Motor neuron (in vitro differentiated cells): ENCODE measurements at regions of chr13 and their contacts with region 1.

Region 1: DNA sequence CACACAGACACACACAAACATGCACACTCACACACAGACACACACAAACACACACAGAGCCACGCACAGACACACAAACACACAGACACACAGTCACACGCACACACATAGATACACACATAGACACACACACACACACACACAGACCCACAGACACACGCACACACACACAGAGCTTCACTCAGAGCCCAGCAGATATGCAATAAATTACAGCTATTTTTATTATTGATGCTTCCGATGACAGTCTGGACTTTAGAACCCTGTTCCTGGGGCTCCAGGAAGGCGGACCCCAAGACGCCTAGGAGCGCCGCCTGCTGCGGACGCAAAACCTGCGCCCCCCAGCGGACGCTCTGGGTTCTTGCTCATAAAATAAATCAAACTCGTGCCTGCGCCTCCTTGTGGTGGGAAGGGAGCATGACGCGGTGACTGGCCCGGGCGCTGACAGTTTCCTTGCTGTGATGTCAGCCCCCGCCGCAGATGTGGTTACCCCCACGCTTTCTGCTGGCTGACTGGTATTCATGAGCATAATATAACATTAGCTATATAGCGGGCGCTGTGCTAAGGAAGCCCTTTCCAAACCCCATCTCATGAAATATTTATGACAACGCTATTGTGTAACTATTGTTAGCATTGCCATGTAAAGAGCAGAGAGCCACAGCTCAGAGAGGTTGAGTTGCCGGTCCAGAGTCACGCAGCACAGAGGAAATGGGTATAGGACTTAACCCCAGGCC is 64.4 kb upstream of the TM9SF2 start:
- ATAC-seq: peak; percentile 68 to 90 (median 74)
- H3K4me3 ChIP-seq: no peak overlapping the region
- H3K27ac ChIP-seq: no peak overlapping the region
- H3K4me1 ChIP-seq: peaks cover 6 to 13% of the 10 kb centered on the region in 2 donors

Region 2: GRCh38 chr13:99176309-99177276 is 260.3 kb before region 1 on chr13:
- in situ Hi-C with region 1: loop called in 2 of 9 experiments (anchors 25 kb)
- ATAC-seq: peak; percentile 61 to 99 (median 81)
- H3K4me3 ChIP-seq: no peak overlapping the region
- H3K27ac ChIP-seq: no peak overlapping the region
- H3K4me1 ChIP-seq: no peaks in the 10 kb centered on the region

Region 3: GRCh38 chr13:99269627-99270241 is 167.1 kb before region 1 on chr13:
- in situ Hi-C with region 1: loop called in 1 of 9 experiments (anchors 10 kb)
- ATAC-seq: peak in 4 of 8 experiments; percentile 52 to 89 (median 84)
- H3K4me3 ChIP-seq: no peak overlapping the region
- H3K27ac ChIP-seq: no peak overlapping the region
- H3K4me1 ChIP-seq: no peaks in the 10 kb centered on the region

Region 4: GRCh38 chr13:99895223-99895994 is 458.6 kb after region 1 on chr13:
- in situ Hi-C with region 1: no loop called
- ATAC-seq: no peak
- H3K4me3 ChIP-seq: no peak overlapping the region
- H3K27ac ChIP-seq: no peak overlapping the region
- H3K4me1 ChIP-seq: peaks cover 17 to 23% of the 10 kb centered on the region in 2 donors